ENCODE measurements at regions of chr15 and their contacts with region 1.

Region 1: DNA sequence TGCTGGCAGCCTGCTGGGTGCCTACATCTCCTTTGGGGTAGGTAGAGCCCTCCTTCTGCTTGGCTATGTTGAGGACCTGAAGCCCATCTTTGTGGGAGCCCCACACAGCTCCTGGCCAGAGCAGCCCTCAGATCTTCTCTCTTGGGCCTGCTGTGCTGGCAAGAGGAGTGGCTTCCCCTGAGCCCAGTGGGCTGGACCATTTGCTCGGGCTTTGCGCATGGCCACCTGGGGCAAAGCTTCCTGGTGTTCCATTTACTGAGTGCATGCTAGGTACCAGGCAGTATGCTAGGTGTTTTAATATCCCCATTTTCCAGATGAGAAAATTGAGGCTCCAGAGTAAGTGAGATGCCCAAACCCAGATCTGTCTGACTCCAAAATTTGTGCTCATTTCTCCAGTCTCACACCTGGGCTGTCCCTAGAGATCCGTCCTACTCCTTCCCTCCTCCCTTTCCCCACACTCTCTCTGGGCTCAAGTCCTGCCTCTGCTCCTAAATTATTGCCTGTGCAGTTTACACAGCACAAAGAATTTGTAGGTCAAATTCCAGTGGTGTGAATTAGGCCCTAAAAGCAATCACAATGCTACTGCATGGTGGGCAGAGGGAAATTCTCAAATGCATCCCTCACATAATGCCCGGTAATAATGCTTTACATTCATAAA is 39.7 kb downstream of the SLC28A1 start:
- DNase-seq: no peak
- ATAC-seq: no peak
- H3K4me3 ChIP-seq: no peak overlapping the region
- H3K27ac ChIP-seq: no peak overlapping the region
- H3K4me1 ChIP-seq: peaks cover 0 to 25% (median 12%) of the 10 kb centered on the region in 9 donors
- H3K27me3 ChIP-seq: no peaks in the 10 kb centered on the region
- CTCF ChIP-seq: no peak

Region 2: DNA sequence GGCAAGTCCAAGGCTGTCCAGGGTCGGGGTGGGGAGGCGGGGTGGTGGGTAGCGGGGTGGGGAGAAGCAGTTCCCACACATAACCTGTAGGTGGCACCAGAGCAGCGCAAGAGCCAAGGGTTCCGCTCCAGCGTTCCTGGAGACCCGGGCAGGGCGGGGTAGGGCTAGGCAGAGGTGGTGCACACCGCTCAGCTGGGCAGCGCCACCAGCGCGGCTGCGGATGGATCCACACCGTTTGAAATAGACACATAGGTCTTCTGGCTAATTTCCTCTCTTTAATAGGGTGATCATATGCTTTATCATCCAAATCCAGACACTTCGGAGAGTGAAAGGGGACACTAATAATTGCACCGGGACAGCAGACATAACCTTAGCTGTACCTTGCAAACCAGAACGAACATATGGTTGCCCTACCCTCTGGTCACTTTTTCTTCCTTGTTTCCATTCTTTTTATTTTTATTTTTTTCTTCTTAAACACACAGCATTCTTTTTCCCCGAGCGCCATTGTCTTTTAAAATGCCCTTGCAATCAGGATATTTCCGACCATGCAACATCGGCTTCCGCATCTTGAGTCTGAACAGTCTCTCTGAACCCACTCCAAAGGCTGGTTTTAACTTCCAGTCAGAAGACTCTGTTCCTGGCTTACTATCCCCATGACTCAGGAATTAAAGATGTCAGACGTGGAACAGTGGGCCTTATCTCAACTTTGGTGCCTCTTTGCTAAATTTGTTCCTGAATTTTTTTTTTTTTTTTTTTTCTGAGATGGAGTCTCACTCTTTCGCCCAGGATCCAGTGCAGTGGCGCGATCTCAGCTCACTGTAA is 335.9 kb before region 1 on chr15:
- intact Hi-C with region 1: loop called in 3 of 10 experiments (anchors 2 to 10 kb)
- DNase-seq: peak; percentile 84 to 86
- ATAC-seq: peak; percentile 98 to 99 (median 98)
- H3K4me3 ChIP-seq: peak overlapping the region in 8 of 10 donors; percentile 14 to 61 (median 48)
- H3K27ac ChIP-seq: no peak overlapping the region
- H3K4me1 ChIP-seq: peaks cover 0 to 10% (median 4%) of the 10 kb centered on the region in 9 donors
- H3K27me3 ChIP-seq: no peaks in the 10 kb centered on the region
- CTCF ChIP-seq: peak; percentile 85 to 97 (median 94)

Region 3: DNA sequence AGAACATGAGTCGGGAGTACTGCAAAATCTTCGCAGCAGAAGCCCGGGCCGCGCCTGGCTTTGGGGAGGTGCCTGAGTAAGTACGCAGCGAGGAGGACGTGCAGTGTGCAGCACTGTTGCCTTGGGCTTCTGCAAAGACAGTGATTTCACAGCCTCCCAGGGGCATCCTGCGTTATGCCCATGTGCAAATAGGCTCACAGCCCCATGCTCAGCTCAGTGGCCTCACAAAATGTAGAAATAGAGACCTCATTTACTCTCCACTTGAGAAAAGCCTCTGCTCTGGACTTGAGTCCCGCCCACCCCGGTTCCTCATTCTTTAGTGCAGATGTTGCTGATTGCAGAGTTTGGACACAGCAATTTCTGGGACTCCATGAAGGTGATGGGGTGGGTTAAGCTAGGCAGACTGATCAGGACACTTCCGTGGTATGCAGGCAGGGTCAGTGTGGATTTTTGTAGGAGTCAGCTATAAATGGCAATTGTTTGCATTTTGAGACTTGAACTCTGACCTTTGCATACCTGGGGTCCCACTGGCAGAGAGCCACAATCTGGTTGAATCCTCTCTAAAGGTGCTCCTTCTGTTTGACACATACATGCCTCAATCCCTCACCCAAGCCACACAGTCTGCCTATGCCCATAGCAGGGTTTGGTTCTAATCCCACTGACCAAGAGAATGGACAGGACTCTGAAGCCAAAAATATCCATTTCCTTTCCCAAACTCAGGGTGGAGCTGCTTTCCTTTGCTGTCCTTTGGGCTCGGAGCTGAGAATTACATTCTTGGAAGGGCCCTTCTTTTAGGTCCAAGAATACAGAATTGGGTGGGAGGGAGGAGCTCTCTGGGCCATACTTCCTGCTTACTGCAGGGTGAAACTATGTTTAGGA is 60.4 kb before region 1 on chr15:
- intact Hi-C with region 1: loop called (anchors 5 to 10 kb)
- DNase-seq: no peak
- ATAC-seq: peak; percentile 8 to 77 (median 40)
- H3K4me3 ChIP-seq: peak overlapping the region in 5 of 10 donors; percentile 3 to 29 (median 21)
- H3K27ac ChIP-seq: peak overlapping the region in 8 of 10 donors; percentile 13 to 65 (median 48)
- H3K4me1 ChIP-seq: peaks cover 11 to 51% (median 29%) of the 10 kb centered on the region in 9 donors
- H3K27me3 ChIP-seq: no peaks in the 10 kb centered on the region
- CTCF ChIP-seq: peak in 8 of 9 donors; percentile 9 to 61 (median 46)

Region 4: GRCh38 chr15:84871428-84872305 is 52.5 kb before region 1 on chr15:
- intact Hi-C with region 1: loop called in 5 of 10 experiments (anchors 2 to 10 kb)
- DNase-seq: no peak
- ATAC-seq: peak in 6 of 8 donors; percentile 4 to 34 (median 18)
- H3K4me3 ChIP-seq: no peak overlapping the region
- H3K27ac ChIP-seq: peak overlapping the region in 1 of 10 donors; percentile 36
- H3K4me1 ChIP-seq: peaks cover 0 to 17% (median 3%) of the 10 kb centered on the region in 9 donors
- H3K27me3 ChIP-seq: no peaks in the 10 kb centered on the region
- CTCF ChIP-seq: no peak

Measured in heart right ventricle (tissue), 16 donors.